Panc1 (cell line): ENCODE measurements at regions of chr5 and their contacts with region 1.

Region 1: DNA sequence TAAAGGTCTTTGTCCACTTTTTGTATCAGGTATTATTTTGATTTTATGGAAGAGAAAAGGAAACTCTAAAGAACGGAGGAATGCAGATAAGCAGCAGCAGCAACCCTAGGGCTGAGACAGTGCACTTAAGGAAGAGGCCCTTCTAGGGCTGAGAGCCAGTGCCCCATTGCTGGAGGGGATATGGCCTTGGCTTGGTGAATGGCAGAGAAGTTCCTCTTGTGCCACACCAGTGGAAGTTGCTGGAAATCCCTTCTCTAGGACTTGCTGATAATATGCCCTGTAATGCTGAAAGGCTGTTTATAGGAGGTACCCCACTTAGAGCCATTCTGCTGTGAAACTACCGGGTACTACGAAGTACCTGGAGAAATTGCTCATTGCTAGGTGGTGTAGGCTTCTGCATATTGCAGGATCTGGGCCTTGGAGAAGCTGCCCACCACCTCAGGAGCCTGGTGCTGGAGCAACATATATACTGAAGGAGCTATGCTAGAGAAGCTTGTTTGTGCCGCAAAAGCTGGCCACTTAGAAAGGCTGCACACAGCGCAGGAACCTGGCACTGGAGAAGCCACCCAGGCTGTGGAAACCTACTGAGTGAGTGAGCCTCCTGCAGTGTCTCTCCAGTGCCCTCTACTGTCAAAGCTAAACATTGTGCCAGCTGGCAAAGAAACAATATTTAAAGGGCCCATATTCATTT is 9.6 kb upstream of the UBTD2 start:
- DNase-seq: peak; percentile 59
- ATAC-seq: peak; percentile 98
- H3K4me3 ChIP-seq: no peak overlapping the region; a peak in 1 of 4 replicates
- H3K27ac ChIP-seq: peak overlapping the region; percentile 63
- H3K4me1 ChIP-seq: peaks cover 10% of the 10 kb centered on the region
- H3K27me3 ChIP-seq: no peaks in the 10 kb centered on the region
- CTCF ChIP-seq: peak; percentile 98

Region 2: DNA sequence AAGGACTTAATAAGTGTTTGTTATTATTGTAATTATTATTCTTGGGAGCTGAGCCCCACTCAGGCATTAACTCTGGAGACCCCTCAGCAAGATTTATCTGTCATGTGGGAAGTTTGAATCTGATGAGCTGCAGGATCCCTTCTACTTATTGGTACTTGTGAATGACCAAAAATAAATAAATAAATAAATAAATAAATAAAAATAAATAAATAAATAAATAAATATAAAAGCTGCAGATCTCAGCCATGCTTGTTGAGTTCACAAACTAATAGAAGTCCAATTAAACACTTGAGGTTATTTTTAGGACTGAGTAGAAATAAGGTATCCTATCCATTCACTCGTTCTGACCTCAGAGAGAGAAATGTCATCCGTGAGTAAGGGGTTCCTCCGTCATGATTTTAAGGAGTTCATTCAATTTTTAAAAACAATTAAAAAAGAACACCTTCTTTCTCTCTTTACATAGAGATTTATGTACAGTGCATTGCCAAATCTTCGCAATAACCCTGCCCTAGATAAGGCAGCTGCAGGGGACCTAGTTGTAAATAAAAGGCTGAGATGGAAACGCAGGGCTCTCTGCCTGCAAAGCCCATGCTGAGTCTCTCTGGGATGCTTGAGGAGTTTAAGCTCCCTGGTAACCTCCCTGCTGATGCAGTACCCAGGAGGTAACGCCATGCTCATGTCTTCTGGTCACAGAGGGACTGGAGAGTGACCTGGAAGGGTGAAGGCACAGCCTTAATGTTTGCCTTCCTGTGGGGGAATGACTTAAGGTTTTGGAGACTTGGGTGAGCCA is 98.0 kb before region 1 on chr5:
- CTCF ChIA-PET with region 1: interaction called, 10 read pairs
- POLR2A ChIA-PET with region 1: no interaction called
- in situ Hi-C with region 1: no loop called
- intact Hi-C with region 1: loop called (anchors 10 kb)
- DNase-seq: no peak
- ATAC-seq: peak; percentile 68
- H3K4me3 ChIP-seq: no peak overlapping the region
- H3K27ac ChIP-seq: no peak overlapping the region
- H3K4me1 ChIP-seq: peaks cover 6% of the 10 kb centered on the region; the same call in 1 of the 2 replicates
- H3K27me3 ChIP-seq: no peaks in the 10 kb centered on the region
- CTCF ChIP-seq: no peak

Region 3: DNA sequence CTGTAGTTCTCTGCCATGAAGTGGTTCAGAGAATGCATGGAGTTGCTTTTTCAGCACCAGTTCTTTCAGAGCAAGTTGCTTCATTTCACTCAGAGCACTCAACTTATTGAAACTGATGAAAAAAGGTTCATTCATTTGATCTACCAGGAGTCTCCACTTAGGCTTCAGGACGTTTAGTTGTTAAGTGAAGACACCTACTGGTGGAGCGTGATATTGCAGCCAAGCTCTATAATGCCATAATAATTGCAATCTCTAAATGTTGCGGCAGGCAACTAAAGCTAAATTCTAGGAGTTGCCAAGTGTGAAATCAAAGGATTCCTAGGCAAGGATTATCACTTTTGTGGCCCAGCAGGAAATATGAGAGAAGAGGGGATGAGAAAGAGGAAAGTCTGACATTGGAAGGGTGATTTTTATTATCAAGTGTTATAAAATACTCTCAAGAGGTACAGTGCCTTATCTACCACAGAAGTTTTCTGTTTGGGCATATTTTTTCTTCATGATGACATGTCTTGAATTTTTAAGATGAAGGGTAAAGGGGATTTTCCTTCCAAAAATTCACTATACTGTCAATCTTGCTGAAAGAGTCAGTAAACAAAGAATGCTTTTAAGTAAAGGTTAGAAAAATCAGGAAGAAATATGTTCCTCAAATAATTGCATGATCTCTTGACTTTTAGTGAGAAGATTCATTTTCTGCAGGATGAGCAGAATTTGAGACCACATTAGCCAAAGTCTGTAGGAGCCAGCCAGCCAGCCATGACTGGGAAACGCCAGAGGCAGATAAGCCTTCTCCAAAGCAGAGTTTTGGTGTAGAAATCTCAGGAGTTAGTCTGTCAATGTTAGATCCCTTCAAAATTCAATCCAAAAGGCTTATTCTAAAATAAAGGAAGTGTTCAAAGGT is 77.7 kb after region 1 on chr5:
- CTCF ChIA-PET with region 1: no interaction called
- POLR2A ChIA-PET with region 1: no interaction called
- in situ Hi-C with region 1: no loop called
- intact Hi-C with region 1: loop called (anchors 5 kb)
- DNase-seq: no peak
- ATAC-seq: peak; percentile 76
- H3K4me3 ChIP-seq: no peak overlapping the region
- H3K27ac ChIP-seq: peak overlapping the region; percentile 66; the same call in 1 of the 2 replicates
- H3K4me1 ChIP-seq: peaks cover 3% of the 10 kb centered on the region; the same call in 1 of the 2 replicates
- H3K27me3 ChIP-seq: no peaks in the 10 kb centered on the region
- CTCF ChIP-seq: peak; percentile 83